Left lung (tissue), 14 donors: ENCODE measurements at regions of chr11 and their contacts with region 1.

Region 1: DNA sequence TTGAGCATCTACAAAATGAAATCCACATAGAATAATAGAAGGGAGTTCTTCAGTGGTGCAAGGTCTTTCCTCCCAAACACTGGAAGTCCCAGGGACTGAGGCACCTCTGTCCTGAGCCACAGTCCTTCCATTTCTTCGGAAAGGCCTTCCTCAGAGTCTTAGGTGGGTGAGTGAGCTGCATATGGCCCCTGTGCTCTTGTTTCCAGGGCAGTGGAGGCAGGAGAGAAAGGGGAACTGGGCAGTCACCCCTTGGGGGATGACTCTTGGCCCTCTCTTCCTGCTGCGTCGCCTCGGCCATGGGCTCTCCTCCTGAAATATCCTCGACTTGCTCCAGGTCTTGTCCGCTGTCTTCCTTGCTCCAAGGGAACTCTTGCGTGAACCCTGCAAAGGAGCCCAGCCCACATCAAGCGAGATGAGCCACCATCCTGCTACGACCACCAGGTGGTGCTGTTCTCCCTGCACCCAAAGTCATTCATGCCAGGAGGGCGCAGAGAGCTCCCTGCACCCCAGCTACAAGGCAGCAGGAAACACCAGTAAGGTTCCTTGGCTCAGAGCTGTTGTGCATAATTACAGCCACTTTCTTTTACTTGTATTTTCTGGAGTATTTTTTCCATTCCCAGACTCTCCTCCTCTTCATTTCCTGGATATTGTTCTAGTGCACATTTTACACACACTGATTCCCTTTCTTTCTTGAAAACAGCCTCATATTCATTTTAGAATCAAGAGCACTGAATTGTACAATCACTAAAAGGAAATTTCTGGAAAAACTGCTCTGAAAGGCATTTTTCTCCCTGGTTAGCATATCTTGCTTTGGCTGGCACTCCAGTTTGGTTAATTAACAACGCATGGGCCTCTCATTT is 397.8 kb downstream of the OPCML start:
- DNase-seq: peak in 3 of 4 donors; percentile 41 to 66 (median 42)
- ATAC-seq: peak; percentile 93
- H3K4me3 ChIP-seq: no peak overlapping the region
- H3K27ac ChIP-seq: no peak overlapping the region
- H3K4me1 ChIP-seq: no peaks in the 10 kb centered on the region
- H3K27me3 ChIP-seq: no peaks in the 10 kb centered on the region
- CTCF ChIP-seq: peak; percentile 60 to 84

Region 2: GRCh38 chr11:133821776-133822175 is 687.2 kb after region 1 on chr11:
- intact Hi-C with region 1: loop called in 1 of 2 experiments (anchors 10 kb)
- DNase-seq: peak in 2 of 4 donors; percentile 42 to 74
- ATAC-seq: peak; percentile 84
- H3K4me3 ChIP-seq: no peak overlapping the region
- H3K27ac ChIP-seq: no peak overlapping the region
- H3K4me1 ChIP-seq: no peaks in the 10 kb centered on the region
- H3K27me3 ChIP-seq: peaks cover 0 to 7% of the 10 kb centered on the region in 2 donors
- CTCF ChIP-seq: peak; percentile 37 to 61